ENCODE measurements at regions of chr6 and their contacts with region 1.

Region 1: GRCh38 chr6:36094753-36095496 is 35.4 kb upstream of the MAPK13 start:
- DNase-seq: peak; percentile 61 to 82 (median 77)
- ATAC-seq: peak; percentile 88
- H3K4me3 ChIP-seq: no peak overlapping the region
- H3K4me3 Mint-ChIP-seq: no peak overlapping the region
- H3K27ac ChIP-seq: peak overlapping the region; percentile 62
- H3K27ac Mint-ChIP-seq: peak overlapping the region in 8 of 9 donors; percentile 46 to 85 (median 78)
- H3K4me1 ChIP-seq: peaks cover 15 to 21% of the 10 kb centered on the region in 2 donors
- H3K4me1 Mint-ChIP-seq: peaks cover 14 to 48% (median 40%) of the 10 kb centered on the region in 7 donors
- H3K27me3 ChIP-seq: no peaks in the 10 kb centered on the region
- H3K27me3 Mint-ChIP-seq: no peaks in the 10 kb centered on the region

Region 2: GRCh38 chr6:35522660-35523658 is 572.0 kb before region 1 on chr6:
- CTCF ChIA-PET with region 1: no interaction called
- POLR2A ChIA-PET with region 1: no interaction called
- intact Hi-C with region 1: loop called in 1 of 2 experiments (anchors 5 kb)
- DNase-seq: peak; percentile 61 to 82 (median 74)
- ATAC-seq: peak; percentile 89
- H3K4me3 ChIP-seq: no peak overlapping the region
- H3K4me3 Mint-ChIP-seq: peak overlapping the region; percentile 56 to 84 (median 76)
- H3K27ac ChIP-seq: peak overlapping the region; percentile 53
- H3K27ac Mint-ChIP-seq: peak overlapping the region; percentile 53 to 91 (median 77)
- H3K4me1 ChIP-seq: peaks cover 9 to 19% of the 10 kb centered on the region in 2 donors
- H3K4me1 Mint-ChIP-seq: peaks cover 9 to 32% (median 26%) of the 10 kb centered on the region in 7 donors
- H3K27me3 ChIP-seq: no peaks in the 10 kb centered on the region
- H3K27me3 Mint-ChIP-seq: peaks cover 0 to 2% (median 0%) of the 10 kb centered on the region in 5 donors

Region 3: GRCh38 chr6:36033935-36034334 is 61.0 kb before region 1 on chr6:
- CTCF ChIA-PET with region 1: interaction called, 104 read pairs
- POLR2A ChIA-PET with region 1: interaction called, 56 read pairs
- intact Hi-C with region 1: no loop called
- DNase-seq: peak in 2 of 9 donors; percentile 10 to 20
- ATAC-seq: peak; percentile 67
- H3K4me3 ChIP-seq: no peak overlapping the region
- H3K4me3 Mint-ChIP-seq: peak overlapping the region in 9 of 10 donors; percentile 50 to 73 (median 60)
- H3K27ac ChIP-seq: no peak overlapping the region
- H3K27ac Mint-ChIP-seq: peak overlapping the region in 5 of 9 donors; percentile 4 to 31 (median 15)
- H3K4me1 ChIP-seq: peaks cover 48 to 51% of the 10 kb centered on the region in 2 donors
- H3K4me1 Mint-ChIP-seq: peaks cover 59 to 89% (median 82%) of the 10 kb centered on the region in 7 donors
- H3K27me3 ChIP-seq: no peaks in the 10 kb centered on the region
- H3K27me3 Mint-ChIP-seq: no peaks in the 10 kb centered on the region

Region 4: DNA sequence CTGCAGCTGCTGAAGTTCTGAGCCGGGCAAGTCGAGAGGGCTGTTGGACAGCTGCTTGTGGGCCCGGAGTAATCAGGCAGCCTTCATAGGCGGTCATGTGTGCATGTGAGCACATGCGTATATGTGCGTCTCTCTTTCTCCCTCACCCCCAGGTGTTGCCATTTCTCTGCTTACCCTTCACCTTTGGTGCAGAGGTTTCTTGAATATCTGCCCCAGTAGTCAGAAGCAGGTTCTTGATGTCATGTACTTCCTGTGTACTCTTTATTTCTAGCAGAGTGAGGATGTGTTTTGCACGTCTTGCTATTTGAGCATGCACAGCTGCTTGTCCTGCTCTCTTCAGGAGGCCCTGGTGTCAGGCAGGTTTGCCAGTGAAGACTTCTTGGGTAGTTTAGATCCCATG is 14.2 kb after region 1 on chr6:
- CTCF ChIA-PET with region 1: interaction called, 53 read pairs
- POLR2A ChIA-PET with region 1: interaction called, 27 read pairs
- intact Hi-C with region 1: loop called in 1 of 2 experiments (anchors 1 kb)
- DNase-seq: peak in 7 of 9 donors; percentile 70 to 90 (median 84)
- ATAC-seq: peak; percentile 95
- H3K4me3 ChIP-seq: no peak overlapping the region
- H3K4me3 Mint-ChIP-seq: peak overlapping the region; percentile 34 to 67 (median 51)
- H3K27ac ChIP-seq: peak overlapping the region; percentile 69
- H3K27ac Mint-ChIP-seq: peak overlapping the region; percentile 75 to 98 (median 96)
- H3K4me1 ChIP-seq: peaks cover 27 to 46% of the 10 kb centered on the region in 2 donors
- H3K4me1 Mint-ChIP-seq: peaks cover 27 to 78% (median 54%) of the 10 kb centered on the region in 7 donors
- H3K27me3 ChIP-seq: no peaks in the 10 kb centered on the region
- H3K27me3 Mint-ChIP-seq: no peaks in the 10 kb centered on the region

Region 5: DNA sequence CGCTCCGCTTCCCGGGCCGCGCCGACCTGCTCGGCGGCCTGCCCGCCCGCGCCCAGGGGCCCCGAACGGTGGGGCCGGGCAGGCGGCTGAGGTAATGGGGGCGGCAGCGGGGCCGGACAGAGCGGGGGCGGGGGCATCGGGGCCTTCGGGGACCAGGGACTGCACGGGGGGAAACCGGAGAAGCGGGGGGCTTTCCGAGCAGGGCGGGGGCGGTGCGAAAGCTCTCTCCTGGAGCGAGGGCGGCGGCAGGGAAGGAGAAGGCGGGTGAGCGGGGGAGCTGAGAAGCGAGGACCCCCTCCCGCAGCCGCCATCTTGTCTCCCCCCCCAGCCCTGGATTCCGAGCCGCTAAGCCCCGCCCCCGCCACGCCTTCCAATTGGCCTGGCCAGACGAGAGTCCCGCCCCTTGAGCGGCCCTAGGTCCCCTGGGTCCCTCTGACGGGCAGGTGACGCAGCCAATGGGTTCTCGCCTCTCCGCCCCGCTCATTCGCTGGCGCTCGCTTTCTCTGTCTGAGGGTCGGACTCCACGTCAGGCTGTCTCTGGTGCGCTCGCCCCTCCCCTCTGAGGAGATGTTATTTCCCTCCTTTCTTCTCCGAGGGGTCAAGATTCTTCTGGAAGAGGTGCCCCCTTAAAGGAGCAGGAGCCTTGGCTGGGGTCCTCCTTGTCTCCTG is 102.1 kb after region 1 on chr6:
- CTCF ChIA-PET with region 1: interaction called, 11 read pairs
- POLR2A ChIA-PET with region 1: interaction called, 5 read pairs
- intact Hi-C with region 1: loop called in 1 of 2 experiments (anchors 1 kb)
- DNase-seq: peak; percentile 94 to 100 (median 98)
- ATAC-seq: peak; percentile 96
- H3K4me3 ChIP-seq: peak overlapping the region; percentile 81
- H3K4me3 Mint-ChIP-seq: peak overlapping the region; percentile 88 to 95 (median 92)
- H3K27ac ChIP-seq: peak overlapping the region; percentile 84
- H3K27ac Mint-ChIP-seq: peak overlapping the region; percentile 69 to 96 (median 92)
- H3K4me1 ChIP-seq: peaks cover 33 to 36% of the 10 kb centered on the region in 2 donors
- H3K4me1 Mint-ChIP-seq: peaks cover 19 to 59% (median 47%) of the 10 kb centered on the region in 7 donors
- H3K27me3 ChIP-seq: no peaks in the 10 kb centered on the region
- H3K27me3 Mint-ChIP-seq: peaks cover 0 to 3% (median 0%) of the 10 kb centered on the region in 5 donors

Region 6: GRCh38 chr6:36360241-36361054 is 265.5 kb after region 1 on chr6:
- CTCF ChIA-PET with region 1: interaction called, 3 read pairs
- POLR2A ChIA-PET with region 1: no interaction called
- intact Hi-C with region 1: loop called in 1 of 2 experiments (anchors 1 kb)
- DNase-seq: peak; percentile 37 to 74 (median 66)
- ATAC-seq: peak; percentile 95
- H3K4me3 ChIP-seq: no peak overlapping the region
- H3K4me3 Mint-ChIP-seq: no peak overlapping the region
- H3K27ac ChIP-seq: no peak overlapping the region
- H3K27ac Mint-ChIP-seq: peak overlapping the region in 2 of 9 donors; percentile 24 to 55
- H3K4me1 ChIP-seq: peaks cover 4 to 6% of the 10 kb centered on the region in 2 donors
- H3K4me1 Mint-ChIP-seq: peaks cover 0 to 30% (median 4%) of the 10 kb centered on the region in 7 donors
- H3K27me3 ChIP-seq: no peaks in the 10 kb centered on the region
- H3K27me3 Mint-ChIP-seq: peaks cover 0 to 15% (median 4%) of the 10 kb centered on the region in 5 donors

Region 7: DNA sequence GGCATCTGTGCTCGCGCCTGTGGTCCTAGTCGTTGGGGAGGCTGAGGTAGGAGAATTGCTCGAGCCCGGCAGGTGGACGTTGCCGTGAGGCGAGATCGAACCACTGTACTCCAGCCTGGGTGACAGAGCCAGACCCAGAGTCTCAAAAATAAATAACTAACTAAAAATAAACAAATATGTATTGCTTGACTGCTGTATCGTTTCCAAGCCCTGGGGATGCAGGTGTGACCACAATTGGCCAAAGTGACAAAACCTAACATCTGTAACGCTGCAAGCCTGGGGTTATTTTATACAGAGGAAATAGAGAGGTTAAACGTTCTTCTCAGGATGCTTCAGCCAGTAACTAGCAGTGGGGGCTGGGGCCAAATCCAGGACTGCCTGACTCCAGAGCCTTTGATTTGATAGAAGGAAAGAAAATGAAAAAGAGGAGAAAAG is 497.3 kb after region 1 on chr6:
- CTCF ChIA-PET with region 1: no interaction called
- POLR2A ChIA-PET with region 1: no interaction called
- intact Hi-C with region 1: no loop called
- DNase-seq: no peak
- ATAC-seq: no peak
- H3K4me3 ChIP-seq: no peak overlapping the region
- H3K4me3 Mint-ChIP-seq: peak overlapping the region; percentile 50 to 93 (median 80)
- H3K27ac ChIP-seq: peak overlapping the region; percentile 98
- H3K27ac Mint-ChIP-seq: peak overlapping the region; percentile 90 to 97 (median 96)
- H3K4me1 ChIP-seq: peaks cover 15 to 16% of the 10 kb centered on the region in 2 donors
- H3K4me1 Mint-ChIP-seq: peaks cover 12 to 30% (median 23%) of the 10 kb centered on the region in 7 donors
- H3K27me3 ChIP-seq: no peaks in the 10 kb centered on the region
- H3K27me3 Mint-ChIP-seq: peaks cover 0 to 3% (median 0%) of the 10 kb centered on the region in 5 donors

Measured in naive thymus-derived CD4-positive, alpha-beta T cell (primary cell).